ENCODE measurements at regions of chr7 and their contacts with region 1.

Region 1: DNA sequence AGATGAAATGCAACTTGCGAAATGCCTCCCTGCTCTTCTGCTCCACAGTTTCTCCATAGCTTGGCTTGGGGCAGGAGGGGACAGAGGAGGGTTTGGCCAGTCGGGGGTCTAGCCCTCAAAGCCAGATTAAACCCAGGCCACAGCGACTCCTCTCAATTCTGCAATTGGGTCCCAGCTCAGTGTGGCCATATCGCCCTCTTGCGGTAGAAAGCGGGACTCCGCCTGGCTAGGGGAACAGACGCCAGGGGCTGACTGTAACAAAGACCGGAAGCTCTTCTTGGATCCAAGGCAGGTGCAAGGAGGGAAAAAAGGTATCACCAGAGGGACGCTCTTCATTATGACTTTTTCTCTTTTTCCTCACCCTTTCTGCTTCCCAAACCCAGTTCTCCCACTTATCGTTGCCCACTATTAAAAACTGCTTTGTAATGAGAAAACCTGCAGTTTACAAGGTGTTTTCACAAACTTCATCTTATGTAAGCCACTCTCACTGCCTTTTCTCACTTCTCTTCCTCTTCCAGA is 36.6 kb upstream of the TNPO3 start:
- DNase-seq: peak; percentile 93
- ATAC-seq: peak; percentile 94
- H3K4me3 Mint-ChIP-seq: no peak overlapping the region
- H3K27ac Mint-ChIP-seq: no peak overlapping the region
- H3K4me1 Mint-ChIP-seq: peaks cover 20% of the 10 kb centered on the region
- H3K27me3 Mint-ChIP-seq: no peaks in the 10 kb centered on the region

Region 2: DNA sequence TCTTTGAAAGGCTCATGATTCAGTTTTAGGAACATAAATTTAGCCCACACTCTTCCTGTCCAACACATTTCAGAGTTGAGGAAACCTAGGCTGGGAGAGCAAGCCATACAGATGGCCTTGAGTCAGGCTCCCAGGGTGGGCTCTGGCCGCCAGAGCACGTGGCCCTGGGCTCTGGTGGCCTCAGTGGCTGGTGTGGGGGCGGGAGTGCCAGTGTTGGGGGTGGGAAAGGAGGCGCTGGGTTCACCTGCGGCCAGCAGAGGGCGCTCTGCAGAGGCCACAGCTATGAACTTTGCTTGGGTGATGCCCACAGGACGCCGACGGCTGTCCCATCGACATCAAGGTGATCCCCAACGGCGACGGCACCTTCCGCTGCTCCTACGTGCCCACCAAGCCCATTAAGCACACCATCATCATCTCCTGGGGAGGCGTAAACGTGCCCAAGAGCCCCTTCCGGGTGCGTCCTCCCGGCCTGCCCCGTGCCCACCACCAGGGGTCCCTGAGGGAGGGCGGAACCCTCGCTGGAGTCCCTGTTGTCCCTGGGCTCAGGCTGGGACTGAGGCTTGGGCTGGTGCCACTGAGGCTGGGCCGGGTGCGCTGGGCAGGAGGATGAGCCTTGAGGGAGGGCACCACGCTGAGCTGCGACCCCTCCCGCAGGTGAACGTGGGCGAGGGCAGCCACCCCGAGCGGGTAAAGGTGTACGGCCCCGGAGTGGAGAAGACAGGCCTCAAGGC is 249.5 kb before region 1 on chr7:
- CTCF ChIA-PET with region 1: interaction called, 4 read pairs
- POLR2A ChIA-PET with region 1: no interaction called
- intact Hi-C with region 1: loop called in 1 of 2 experiments (anchors 1 kb)
- DNase-seq: peak; percentile 80
- ATAC-seq: peak; percentile 79
- H3K4me3 Mint-ChIP-seq: no peak overlapping the region
- H3K27ac Mint-ChIP-seq: no peak overlapping the region
- H3K4me1 Mint-ChIP-seq: no peaks in the 10 kb centered on the region
- H3K27me3 Mint-ChIP-seq: no peaks in the 10 kb centered on the region

Region 3: GRCh38 chr7:128899392-128899791 is 192.2 kb before region 1 on chr7:
- CTCF ChIA-PET with region 1: interaction called, 15 read pairs
- POLR2A ChIA-PET with region 1: no interaction called
- intact Hi-C with region 1: loop called (anchors 1 kb)
- DNase-seq: no peak
- ATAC-seq: no peak
- H3K4me3 Mint-ChIP-seq: no peak overlapping the region
- H3K27ac Mint-ChIP-seq: no peak overlapping the region
- H3K4me1 Mint-ChIP-seq: peaks cover 1% of the 10 kb centered on the region
- H3K27me3 Mint-ChIP-seq: no peaks in the 10 kb centered on the region

Region 4: GRCh38 chr7:128909625-128910257 is 181.8 kb before region 1 on chr7:
- CTCF ChIA-PET with region 1: interaction called, 10 read pairs
- POLR2A ChIA-PET with region 1: no interaction called
- intact Hi-C with region 1: loop called (anchors 1 kb)
- DNase-seq: no peak
- ATAC-seq: no peak
- H3K4me3 Mint-ChIP-seq: no peak overlapping the region
- H3K27ac Mint-ChIP-seq: no peak overlapping the region
- H3K4me1 Mint-ChIP-seq: peaks cover 2% of the 10 kb centered on the region
- H3K27me3 Mint-ChIP-seq: peaks cover 42% of the 10 kb centered on the region

Region 5: GRCh38 chr7:129009437-129009836 is 82.1 kb before region 1 on chr7:
- CTCF ChIA-PET with region 1: interaction called, 6 read pairs
- POLR2A ChIA-PET with region 1: interaction called, 3 read pairs
- intact Hi-C with region 1: loop called in 1 of 2 experiments (anchors 5 kb)
- DNase-seq: peak; percentile 11
- ATAC-seq: no peak
- H3K4me3 Mint-ChIP-seq: no peak overlapping the region
- H3K27ac Mint-ChIP-seq: peak overlapping the region; percentile 87
- H3K4me1 Mint-ChIP-seq: peaks cover 40% of the 10 kb centered on the region
- H3K27me3 Mint-ChIP-seq: no peaks in the 10 kb centered on the region

Region 6: GRCh38 chr7:129101746-129102145 is 10.2 kb after region 1 on chr7:
- CTCF ChIA-PET with region 1: interaction called, 12 read pairs
- POLR2A ChIA-PET with region 1: no interaction called
- intact Hi-C with region 1: no loop called
- DNase-seq: no peak
- ATAC-seq: no peak
- H3K4me3 Mint-ChIP-seq: no peak overlapping the region
- H3K27ac Mint-ChIP-seq: no peak overlapping the region
- H3K4me1 Mint-ChIP-seq: no peaks in the 10 kb centered on the region
- H3K27me3 Mint-ChIP-seq: no peaks in the 10 kb centered on the region

Measured in activated CD4-positive, alpha-beta T cell treated with anti-CD3 and anti-CD28 coated beads for 36 hours (primary cell).